Activated CD4-positive, alpha-beta T cell treated with anti-CD3 and anti-CD28 coated beads for 36 hours (primary cell): ENCODE measurements at regions of chr3 and their contacts with region 1.

Region 1: GRCh38 chr3:4834403-4834866 is 144.8 kb upstream of the BHLHE40 start:
- DNase-seq: peak; percentile 84
- ATAC-seq: peak; percentile 31
- H3K4me3 Mint-ChIP-seq: peak overlapping the region; percentile 26
- H3K27ac Mint-ChIP-seq: peak overlapping the region; percentile 90
- H3K4me1 Mint-ChIP-seq: peaks cover 86% of the 10 kb centered on the region
- H3K27me3 Mint-ChIP-seq: no peaks in the 10 kb centered on the region

Region 2: DNA sequence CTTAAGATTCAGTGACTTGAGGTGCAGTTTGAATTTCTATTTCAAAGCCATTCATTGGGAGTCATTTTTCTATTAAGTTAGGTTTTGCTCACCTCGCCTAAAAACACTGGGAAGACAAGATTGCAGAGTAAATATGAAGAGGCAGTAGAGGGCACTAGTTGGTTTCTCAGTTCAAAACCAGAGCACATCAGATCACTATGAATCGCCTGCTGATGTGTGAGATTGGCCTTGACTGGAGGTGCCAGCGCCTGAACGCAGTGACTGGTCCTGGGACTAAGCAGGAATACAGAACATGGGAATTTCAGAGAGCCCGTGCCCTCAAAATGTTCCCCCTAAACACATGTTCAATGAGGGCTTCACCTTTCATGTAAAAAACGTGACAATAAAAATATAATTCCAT is 112.3 kb before region 1 on chr3:
- CTCF ChIA-PET with region 1: no interaction called
- POLR2A ChIA-PET with region 1: no interaction called
- intact Hi-C with region 1: loop called (anchors 5 kb)
- DNase-seq: peak; percentile 58
- ATAC-seq: peak; percentile 93
- H3K4me3 Mint-ChIP-seq: no peak overlapping the region
- H3K27ac Mint-ChIP-seq: peak overlapping the region; percentile 51
- H3K4me1 Mint-ChIP-seq: peaks cover 32% of the 10 kb centered on the region
- H3K27me3 Mint-ChIP-seq: no peaks in the 10 kb centered on the region

Region 3: DNA sequence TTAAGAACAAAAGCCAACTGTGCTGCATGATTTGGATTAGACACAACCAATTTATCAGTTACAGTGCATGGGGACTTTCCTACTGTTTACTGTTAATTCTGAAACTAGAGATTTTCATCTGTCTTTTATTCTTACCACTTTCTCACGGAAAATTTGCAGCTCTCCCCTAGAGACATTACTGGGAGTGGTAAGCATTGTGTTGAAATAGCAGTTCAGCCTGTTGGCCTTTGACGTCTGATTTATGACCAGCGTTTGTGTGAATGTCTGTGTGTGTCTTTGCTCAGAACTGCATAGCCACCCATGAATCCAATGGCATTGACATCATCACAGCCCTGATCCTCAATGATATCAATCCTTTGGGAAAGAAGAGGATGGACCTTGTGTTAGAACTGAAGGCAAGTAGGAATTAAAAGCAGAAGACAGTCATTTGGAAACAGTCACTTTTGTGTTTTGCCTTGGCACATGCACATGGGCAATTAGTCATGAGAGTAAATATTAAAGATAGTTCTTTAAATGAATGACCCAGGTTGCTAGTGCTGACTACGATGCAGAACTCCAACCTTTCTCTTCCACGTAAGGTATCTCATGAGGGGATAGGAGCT is 57.4 kb before region 1 on chr3:
- CTCF ChIA-PET with region 1: no interaction called
- POLR2A ChIA-PET with region 1: no interaction called
- intact Hi-C with region 1: loop called (anchors 2 kb)
- DNase-seq: peak; percentile 38
- ATAC-seq: peak; percentile 86
- H3K4me3 Mint-ChIP-seq: no peak overlapping the region
- H3K27ac Mint-ChIP-seq: peak overlapping the region; percentile 91
- H3K4me1 Mint-ChIP-seq: peaks cover 40% of the 10 kb centered on the region
- H3K27me3 Mint-ChIP-seq: no peaks in the 10 kb centered on the region

Region 4: GRCh38 chr3:4845882-4846281 is 11.4 kb after region 1 on chr3:
- CTCF ChIA-PET with region 1: interaction called, 56 read pairs
- POLR2A ChIA-PET with region 1: interaction called, 11 read pairs
- intact Hi-C with region 1: loop called (anchors 1 kb)
- DNase-seq: no peak
- ATAC-seq: peak; percentile 58
- H3K4me3 Mint-ChIP-seq: peak overlapping the region; percentile 16
- H3K27ac Mint-ChIP-seq: peak overlapping the region; percentile 90
- H3K4me1 Mint-ChIP-seq: peaks cover 94% of the 10 kb centered on the region
- H3K27me3 Mint-ChIP-seq: no peaks in the 10 kb centered on the region

Region 5: DNA sequence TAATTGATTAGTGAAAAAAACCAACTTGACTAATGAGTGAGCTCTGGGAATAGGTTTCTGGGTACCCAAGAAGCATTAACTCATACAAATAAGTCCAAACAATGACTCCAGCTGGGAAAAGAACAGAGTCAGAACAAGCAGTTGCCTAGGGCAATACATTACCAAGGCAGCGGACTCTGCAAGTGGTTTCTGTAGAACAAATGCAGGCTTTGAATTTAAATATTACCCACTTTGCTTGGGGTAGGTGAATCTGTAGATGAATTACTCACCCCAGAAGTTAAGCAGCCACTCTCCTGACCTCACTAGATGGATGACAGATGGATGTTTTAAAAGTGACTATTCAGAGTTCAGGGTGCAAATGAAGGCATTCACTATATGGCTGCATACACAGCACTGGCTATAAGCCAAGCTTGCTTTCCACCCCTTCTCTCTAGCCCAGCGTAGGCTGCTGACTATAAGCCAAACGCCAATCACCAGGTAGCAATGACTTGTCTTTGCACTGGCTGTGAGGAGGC is 71.7 kb after region 1 on chr3:
- CTCF ChIA-PET with region 1: no interaction called
- POLR2A ChIA-PET with region 1: no interaction called
- intact Hi-C with region 1: loop called (anchors 2 to 5 kb)
- DNase-seq: peak; percentile 54
- ATAC-seq: peak; percentile 75
- H3K4me3 Mint-ChIP-seq: no peak overlapping the region
- H3K27ac Mint-ChIP-seq: peak overlapping the region; percentile 53
- H3K4me1 Mint-ChIP-seq: peaks cover 75% of the 10 kb centered on the region
- H3K27me3 Mint-ChIP-seq: no peaks in the 10 kb centered on the region

Region 6: DNA sequence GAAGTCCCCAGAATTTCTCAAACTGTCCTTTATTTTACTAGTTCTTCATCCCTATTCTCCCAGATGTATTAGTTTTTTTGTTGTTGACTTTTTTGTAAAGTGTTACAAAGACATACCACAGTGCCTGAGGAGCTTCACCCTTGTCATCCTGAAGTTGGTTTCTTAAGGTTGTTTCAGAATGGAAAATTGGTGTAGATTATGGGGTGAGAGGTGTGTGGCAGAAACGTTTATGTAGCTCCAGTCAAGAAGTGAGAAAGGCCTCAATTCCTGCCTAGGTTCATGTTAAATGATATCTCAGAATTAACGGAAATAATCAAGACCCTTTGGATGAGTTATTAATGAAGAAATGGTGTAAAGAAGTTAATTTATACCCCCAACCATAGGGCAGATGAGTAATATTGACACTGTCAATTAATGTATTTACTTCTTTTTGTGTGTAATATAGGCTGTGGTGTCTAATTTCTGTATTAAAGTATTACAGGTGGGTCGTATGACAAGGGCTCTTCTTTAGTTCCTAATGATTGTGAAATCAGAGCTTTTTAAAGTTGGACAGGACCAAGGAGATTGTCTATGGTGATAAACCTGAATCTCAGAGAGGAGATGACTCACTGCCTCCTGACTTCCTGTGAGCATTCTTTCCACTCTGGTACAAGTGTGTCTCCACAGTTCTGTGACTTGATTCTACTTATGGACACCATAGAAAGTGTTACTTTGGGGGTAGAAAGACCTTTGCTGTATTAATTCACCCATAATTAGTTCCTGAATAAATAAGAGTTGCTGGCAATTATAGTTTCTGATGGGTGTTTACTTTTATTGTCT is 360.1 kb after region 1 on chr3:
- CTCF ChIA-PET with region 1: no interaction called
- POLR2A ChIA-PET with region 1: interaction called, 5 read pairs
- intact Hi-C with region 1: loop called (anchors 5 kb)
- DNase-seq: peak; percentile 62
- ATAC-seq: peak; percentile 34
- H3K4me3 Mint-ChIP-seq: peak overlapping the region; percentile 68
- H3K27ac Mint-ChIP-seq: peak overlapping the region; percentile 98
- H3K4me1 Mint-ChIP-seq: peaks cover 86% of the 10 kb centered on the region
- H3K27me3 Mint-ChIP-seq: no peaks in the 10 kb centered on the region